ENCODE measurements at regions of chr2 and their contacts with region 1.

Region 1: GRCh38 chr2:23824777-23825212 is 102.1 kb downstream of the ATAD2B start:
- DNase-seq: no peak
- ATAC-seq: no peak

Region 2: GRCh38 chr2:23669413-23670244 is 155.2 kb before region 1 on chr2:
- intact Hi-C with region 1: no loop called
- DNase-seq: peak; percentile 91
- ATAC-seq: peak; percentile 92

Region 3: DNA sequence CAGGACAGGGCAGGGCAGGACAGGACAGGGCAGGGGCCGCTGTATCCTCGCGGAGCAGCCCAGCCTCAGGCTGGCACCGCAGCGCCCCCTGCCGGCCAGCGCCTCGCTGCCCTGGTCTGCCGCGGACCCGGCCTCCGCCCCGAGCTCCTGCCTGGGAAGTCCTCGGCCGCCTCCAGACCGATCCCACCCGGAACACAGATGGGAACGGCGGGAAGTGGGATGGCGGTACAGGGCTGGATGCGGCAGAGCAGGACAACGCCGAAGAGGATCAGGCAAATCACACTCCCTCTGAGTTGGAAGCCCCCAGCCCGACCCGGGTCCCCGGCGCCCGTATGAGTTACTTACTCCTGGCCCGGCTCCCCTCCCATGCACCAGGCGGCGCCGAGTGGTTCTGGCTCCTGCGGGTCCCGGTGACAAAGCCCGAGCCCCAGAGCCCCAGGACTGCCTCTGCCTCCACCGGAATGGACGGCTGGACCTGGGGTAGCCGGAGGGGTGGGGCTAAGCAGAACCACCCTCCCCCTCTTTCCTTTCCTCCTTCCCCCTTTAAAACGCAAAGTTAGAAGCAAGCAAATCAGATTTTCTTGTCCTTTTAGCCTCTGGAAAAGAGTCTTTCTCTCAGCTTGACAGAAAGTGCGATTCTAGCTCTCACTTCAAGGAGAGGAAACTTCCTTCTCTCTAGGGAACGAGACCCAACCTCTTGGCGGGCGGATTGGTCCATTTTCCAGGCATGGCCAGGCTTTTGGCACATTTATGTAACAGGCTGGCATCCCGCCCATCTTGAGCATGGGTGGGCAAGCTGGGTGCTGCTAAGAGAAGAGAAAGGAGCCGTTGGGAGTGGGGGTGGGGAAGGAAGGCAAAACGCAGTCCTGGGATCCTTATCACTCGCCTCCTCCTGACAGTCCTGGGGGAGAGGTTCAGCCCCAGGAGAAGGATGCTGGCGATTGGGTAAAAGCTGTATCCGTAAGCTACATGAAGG is 259.9 kb after region 1 on chr2 and contains the start of gene TP53I3:
- intact Hi-C with region 1: loop called (anchors 10 kb)
- DNase-seq: peak; percentile 94
- ATAC-seq: peak; percentile 97
- total RNA-seq, gene TP53I3: 15.4 TPM